ENCODE measurements at regions of chr2 and their contacts with region 1.

Region 1: GRCh38 chr2:227766373-227766883 is 20.7 kb downstream of the SCYGR8 start:
- DNase-seq: peak; percentile 25
- H3K4me3 Mint-ChIP-seq: no peak overlapping the region
- H3K27ac Mint-ChIP-seq: no peak overlapping the region
- H3K4me1 Mint-ChIP-seq: no peaks in the 10 kb centered on the region
- H3K27me3 Mint-ChIP-seq: no peaks in the 10 kb centered on the region

Region 2: DNA sequence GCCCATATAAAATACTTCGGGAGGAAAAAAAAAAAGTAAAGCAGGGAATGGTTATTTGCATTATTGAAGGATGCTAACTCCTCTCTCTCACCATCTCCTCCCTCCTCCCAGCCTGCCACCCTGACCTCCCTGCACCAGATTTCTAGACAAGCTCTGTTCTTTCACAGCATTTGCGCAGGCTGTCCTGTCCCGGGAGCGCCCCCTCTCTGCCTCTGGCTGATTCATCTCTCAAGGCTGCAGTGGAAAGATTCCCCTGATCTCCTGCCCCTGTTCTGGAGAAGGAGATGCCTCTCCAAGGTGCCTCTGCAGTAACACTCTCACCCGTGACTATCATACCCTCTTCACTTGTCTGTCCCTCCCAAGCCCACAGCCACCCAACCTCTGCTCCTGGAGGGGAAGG is 640.9 kb before region 1 on chr2:
- intact Hi-C with region 1: loop called (anchors 1 kb)
- DNase-seq: no peak
- H3K4me3 Mint-ChIP-seq: no peak overlapping the region
- H3K27ac Mint-ChIP-seq: no peak overlapping the region
- H3K4me1 Mint-ChIP-seq: no peaks in the 10 kb centered on the region
- H3K27me3 Mint-ChIP-seq: peaks cover 8% of the 10 kb centered on the region

Region 3: GRCh38 chr2:227238238-227239237 is 527.9 kb before region 1 on chr2:
- intact Hi-C with region 1: loop called (anchors 1 kb)
- DNase-seq: peak; percentile 13
- H3K4me3 Mint-ChIP-seq: no peak overlapping the region
- H3K27ac Mint-ChIP-seq: no peak overlapping the region
- H3K4me1 Mint-ChIP-seq: no peaks in the 10 kb centered on the region
- H3K27me3 Mint-ChIP-seq: peaks cover 4% of the 10 kb centered on the region

Region 4: GRCh38 chr2:227406177-227407031 is 360.0 kb before region 1 on chr2:
- intact Hi-C with region 1: loop called (anchors 1 kb)
- DNase-seq: no peak
- H3K4me3 Mint-ChIP-seq: no peak overlapping the region
- H3K27ac Mint-ChIP-seq: peak overlapping the region; percentile 1
- H3K4me1 Mint-ChIP-seq: peaks cover 40% of the 10 kb centered on the region
- H3K27me3 Mint-ChIP-seq: peaks cover 2% of the 10 kb centered on the region

Region 5: DNA sequence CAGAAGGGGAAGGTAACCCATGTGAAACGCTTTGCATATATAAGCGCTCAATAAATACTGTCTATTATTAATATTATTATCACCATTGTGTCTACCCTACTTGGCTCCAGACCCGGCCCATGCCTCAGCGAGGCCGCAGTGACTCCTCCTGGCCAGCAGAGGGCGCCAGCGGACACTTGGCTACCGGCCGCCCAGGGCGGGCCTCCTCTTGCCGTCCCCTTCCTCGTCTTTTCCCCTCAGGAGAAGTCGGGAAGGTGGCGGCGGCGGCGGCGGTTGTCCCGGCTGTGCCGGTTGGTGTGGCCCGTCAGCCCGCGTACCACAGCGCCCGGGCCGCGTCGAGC is 294.5 kb before region 1 on chr2 and contains the start of gene AGFG1:
- intact Hi-C with region 1: loop called (anchors 5 kb)
- DNase-seq: peak; percentile 78
- H3K4me3 Mint-ChIP-seq: peak within 1 kb of the TSS; percentile 88
- H3K27ac Mint-ChIP-seq: peak within 1 kb of the TSS; percentile 86
- H3K4me1 Mint-ChIP-seq: peaks cover 56% of the 10 kb centered on the region
- H3K27me3 Mint-ChIP-seq: no peaks in the 10 kb centered on the region
- total RNA-seq, gene AGFG1: 239 and 252 TPM in 2 replicates

Region 6: DNA sequence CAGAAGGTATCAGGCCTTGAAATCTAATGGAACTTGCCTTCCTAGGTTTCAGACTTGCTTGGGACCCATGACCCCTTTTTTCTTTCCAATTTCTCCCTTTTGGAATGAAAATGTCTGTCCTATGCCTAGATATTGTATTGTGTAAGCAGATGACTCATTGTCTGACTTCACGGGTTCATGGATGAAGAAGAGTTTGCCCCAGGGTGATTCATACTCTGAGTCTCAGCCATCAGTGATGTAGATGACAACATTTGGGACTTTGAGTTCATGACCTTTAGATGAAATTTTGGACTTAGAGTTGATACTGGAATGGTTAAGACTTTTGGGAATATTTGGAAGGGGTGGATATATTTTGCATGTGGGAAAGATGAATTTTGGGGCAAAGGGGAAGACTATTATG is 111.0 kb before region 1 on chr2:
- intact Hi-C with region 1: loop called (anchors 1 kb)
- DNase-seq: no peak
- H3K4me3 Mint-ChIP-seq: no peak overlapping the region
- H3K27ac Mint-ChIP-seq: no peak overlapping the region
- H3K4me1 Mint-ChIP-seq: no peaks in the 10 kb centered on the region
- H3K27me3 Mint-ChIP-seq: peaks cover 3% of the 10 kb centered on the region

Region 7: GRCh38 chr2:227783404-227784138 is 17.1 kb after region 1 on chr2:
- intact Hi-C with region 1: loop called (anchors 1 kb)
- DNase-seq: no peak
- H3K4me3 Mint-ChIP-seq: peak overlapping the region; percentile 44
- H3K27ac Mint-ChIP-seq: peak overlapping the region; percentile 61
- H3K4me1 Mint-ChIP-seq: peaks cover 15% of the 10 kb centered on the region
- H3K27me3 Mint-ChIP-seq: peaks cover 2% of the 10 kb centered on the region